ENCODE measurements at regions of chr1 and their contacts with region 1.

Region 1: DNA sequence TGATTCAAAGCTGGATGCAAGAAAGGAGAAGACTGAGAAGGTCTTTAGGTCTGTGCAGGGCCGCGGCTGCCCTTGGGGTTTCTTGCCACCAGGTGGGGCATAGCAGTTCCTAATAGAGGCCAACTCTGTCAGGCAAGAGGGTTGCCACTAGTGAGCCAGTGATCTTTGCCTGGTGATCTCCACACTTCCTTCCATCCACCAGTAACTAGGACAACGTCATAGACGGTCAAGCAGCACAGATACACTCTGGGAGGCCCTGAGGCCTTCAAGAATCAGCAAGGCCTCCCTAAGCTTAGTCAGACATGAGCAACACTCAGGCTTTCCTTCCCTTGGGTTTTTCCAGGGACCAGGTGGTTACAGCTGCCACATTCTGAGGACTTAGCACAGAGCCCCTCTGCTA is 32.9 kb upstream of the ATP2B4 start:
- DNase-seq: peak; percentile 72
- H3K4me3 Mint-ChIP-seq: no peak overlapping the region
- H3K27ac Mint-ChIP-seq: no peak overlapping the region
- H3K4me1 Mint-ChIP-seq: peaks cover 26% of the 10 kb centered on the region
- H3K27me3 Mint-ChIP-seq: peaks cover 4% of the 10 kb centered on the region

Region 2: DNA sequence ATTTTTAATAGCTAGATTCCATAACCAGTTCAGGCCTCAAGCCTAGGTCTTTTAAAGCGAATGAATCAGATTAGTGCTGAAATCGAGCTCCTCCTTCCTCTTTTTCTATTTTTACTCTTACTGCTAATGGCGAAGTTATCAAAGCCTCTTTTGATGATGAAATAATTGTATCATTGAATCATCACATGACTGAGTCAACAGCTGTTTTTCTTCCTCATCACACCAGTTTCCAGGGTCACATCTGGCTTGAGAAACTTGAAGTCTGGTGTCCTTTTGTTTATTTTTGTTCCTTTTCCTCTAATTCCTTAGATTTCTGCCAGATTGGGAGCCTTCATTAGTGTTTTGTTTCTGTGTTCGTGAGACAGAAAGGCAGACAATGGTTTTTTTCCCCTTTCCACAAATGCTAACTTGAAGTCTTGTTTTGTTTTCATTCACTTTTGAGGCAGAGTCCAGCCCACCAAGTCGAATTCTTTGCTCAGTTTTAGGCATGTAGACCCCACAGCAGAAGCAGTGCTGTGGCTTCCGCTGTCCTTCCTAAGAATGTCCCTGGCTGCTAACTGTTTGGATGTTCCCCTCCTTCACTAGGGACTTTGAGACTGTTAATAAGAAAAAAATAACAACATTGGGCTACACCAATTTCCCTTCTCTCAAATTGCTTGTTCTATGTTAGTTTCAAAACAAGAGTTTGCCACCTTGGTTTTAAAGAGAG is 190.9 kb before region 1 on chr1:
- CTCF ChIA-PET with region 1: no interaction called
- POLR2A ChIA-PET with region 1: no interaction called
- DNase-seq: no peak
- H3K4me3 Mint-ChIP-seq: no peak overlapping the region
- H3K27ac Mint-ChIP-seq: no peak overlapping the region
- H3K4me1 Mint-ChIP-seq: no peaks in the 10 kb centered on the region
- H3K27me3 Mint-ChIP-seq: peaks cover 42% of the 10 kb centered on the region

Region 3: DNA sequence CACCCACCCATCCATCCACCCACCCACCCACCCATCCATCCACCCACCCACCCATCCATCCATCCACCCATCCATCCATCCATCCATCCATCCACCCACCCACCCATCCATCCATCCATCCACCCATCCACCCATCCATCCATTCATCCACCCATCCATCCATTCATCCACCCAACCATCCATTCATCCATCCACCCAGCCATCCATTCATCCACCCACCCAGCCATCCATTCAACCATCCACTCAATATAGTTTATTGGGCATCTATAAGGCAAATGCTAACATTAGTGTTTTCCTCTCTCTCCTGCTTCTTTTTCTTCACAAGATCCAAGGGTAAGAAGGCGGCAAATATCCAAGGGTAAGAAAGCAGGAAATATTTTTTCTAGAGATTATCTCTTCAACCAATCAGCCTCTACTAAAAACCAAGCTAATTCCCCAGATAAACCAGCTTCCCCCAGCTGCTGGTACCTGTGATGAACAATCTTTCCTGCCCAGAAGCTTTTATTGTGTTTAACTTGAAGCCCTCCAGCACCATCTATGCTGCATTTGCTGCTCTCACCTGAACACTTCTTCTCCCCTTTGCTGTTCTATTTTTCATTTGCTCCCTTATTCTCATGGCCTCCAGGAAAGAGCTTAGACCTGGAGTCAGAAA is 10.3 kb after region 1 on chr1:
- CTCF ChIA-PET with region 1: interaction called, 15 read pairs
- POLR2A ChIA-PET with region 1: interaction called, 5 read pairs
- DNase-seq: no peak
- H3K4me3 Mint-ChIP-seq: no peak overlapping the region
- H3K27ac Mint-ChIP-seq: no peak overlapping the region
- H3K4me1 Mint-ChIP-seq: peaks cover 51% of the 10 kb centered on the region
- H3K27me3 Mint-ChIP-seq: no peaks in the 10 kb centered on the region

Region 4: DNA sequence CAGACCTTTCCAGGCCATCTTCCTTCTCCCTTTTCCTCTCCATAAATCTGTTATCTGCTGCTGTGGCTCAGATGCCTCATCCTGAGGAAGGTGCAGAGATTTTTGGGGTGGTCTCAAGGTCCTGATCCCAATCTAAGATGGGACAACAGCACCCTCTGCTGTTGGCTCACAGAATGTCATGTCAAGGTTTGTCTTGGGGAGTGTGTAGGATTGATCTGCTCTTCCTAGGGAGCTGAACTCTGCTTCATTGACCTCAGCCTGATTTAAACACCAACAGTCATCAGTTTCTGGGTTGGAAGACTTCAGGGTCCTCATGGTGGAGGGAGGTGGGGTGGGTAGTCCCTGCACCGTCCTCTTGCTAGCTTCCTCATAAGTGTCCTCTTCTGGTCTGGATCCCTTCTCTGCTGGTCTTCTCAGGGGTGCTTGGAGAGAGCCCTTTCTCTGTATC is 108.4 kb after region 1 on chr1:
- CTCF ChIA-PET with region 1: interaction called, 35 read pairs
- POLR2A ChIA-PET with region 1: interaction called, 6 read pairs
- DNase-seq: peak; percentile 65
- H3K4me3 Mint-ChIP-seq: no peak overlapping the region
- H3K27ac Mint-ChIP-seq: peak overlapping the region; percentile 10
- H3K4me1 Mint-ChIP-seq: peaks cover 22% of the 10 kb centered on the region
- H3K27me3 Mint-ChIP-seq: no peaks in the 10 kb centered on the region